CD8-positive, alpha-beta T cell (primary cell): ENCODE measurements at regions of chr14 and their contacts with region 1.

Region 1: DNA sequence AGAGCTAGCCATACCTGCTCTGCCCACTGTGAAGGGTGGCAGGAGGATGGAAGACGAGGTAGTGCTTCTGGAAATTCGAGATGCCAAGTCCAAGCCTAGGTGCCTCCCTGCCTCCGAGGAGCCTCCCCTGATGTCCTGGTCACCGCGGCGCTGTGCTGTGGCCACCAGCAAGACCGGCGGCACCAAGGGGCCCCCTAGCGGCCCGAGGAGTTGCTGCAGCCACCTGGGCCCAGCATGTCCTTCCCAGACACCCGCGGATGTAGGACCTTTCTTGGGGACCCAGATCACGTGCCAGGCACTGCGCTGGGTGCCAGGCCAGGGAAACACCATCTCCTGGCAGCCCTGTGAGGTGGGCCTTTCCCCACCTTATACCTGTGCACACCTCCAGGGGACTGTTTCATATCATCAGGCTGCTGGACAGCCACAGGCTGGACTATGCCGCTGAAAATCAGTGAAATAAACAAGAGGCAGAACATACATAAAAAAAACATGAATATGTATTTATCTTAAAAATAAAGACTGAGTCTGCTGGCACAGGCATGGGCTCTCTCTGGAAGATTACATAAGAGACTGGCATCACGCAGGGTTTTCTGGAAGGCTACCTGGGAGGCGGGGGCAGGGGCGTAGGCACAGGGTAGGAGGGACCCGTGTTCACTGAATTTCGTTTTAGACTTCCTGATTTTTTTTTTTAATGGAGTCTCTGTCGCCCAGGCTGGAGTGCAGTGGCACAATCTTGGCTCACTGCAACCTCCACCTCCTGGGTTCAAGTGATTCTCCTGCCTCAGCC is 15.9 kb upstream of the HHIPL1 start:
- DNase-seq: peak; percentile 27 to 72 (median 56)
- ATAC-seq: peak; percentile 77
- H3K4me3 ChIP-seq: no peak overlapping the region
- H3K4me3 Mint-ChIP-seq: no peak overlapping the region
- H3K27ac ChIP-seq: no peak overlapping the region
- H3K27ac Mint-ChIP-seq: no peak overlapping the region
- H3K4me1 ChIP-seq: no peaks in the 10 kb centered on the region
- H3K4me1 Mint-ChIP-seq: peaks cover 2% of the 10 kb centered on the region
- H3K27me3 ChIP-seq: peaks cover 2 to 4% of the 10 kb centered on the region in 2 experiments
- H3K27me3 Mint-ChIP-seq: peaks cover 27% of the 10 kb centered on the region
- CTCF ChIP-seq: peak; percentile 72

Region 2: DNA sequence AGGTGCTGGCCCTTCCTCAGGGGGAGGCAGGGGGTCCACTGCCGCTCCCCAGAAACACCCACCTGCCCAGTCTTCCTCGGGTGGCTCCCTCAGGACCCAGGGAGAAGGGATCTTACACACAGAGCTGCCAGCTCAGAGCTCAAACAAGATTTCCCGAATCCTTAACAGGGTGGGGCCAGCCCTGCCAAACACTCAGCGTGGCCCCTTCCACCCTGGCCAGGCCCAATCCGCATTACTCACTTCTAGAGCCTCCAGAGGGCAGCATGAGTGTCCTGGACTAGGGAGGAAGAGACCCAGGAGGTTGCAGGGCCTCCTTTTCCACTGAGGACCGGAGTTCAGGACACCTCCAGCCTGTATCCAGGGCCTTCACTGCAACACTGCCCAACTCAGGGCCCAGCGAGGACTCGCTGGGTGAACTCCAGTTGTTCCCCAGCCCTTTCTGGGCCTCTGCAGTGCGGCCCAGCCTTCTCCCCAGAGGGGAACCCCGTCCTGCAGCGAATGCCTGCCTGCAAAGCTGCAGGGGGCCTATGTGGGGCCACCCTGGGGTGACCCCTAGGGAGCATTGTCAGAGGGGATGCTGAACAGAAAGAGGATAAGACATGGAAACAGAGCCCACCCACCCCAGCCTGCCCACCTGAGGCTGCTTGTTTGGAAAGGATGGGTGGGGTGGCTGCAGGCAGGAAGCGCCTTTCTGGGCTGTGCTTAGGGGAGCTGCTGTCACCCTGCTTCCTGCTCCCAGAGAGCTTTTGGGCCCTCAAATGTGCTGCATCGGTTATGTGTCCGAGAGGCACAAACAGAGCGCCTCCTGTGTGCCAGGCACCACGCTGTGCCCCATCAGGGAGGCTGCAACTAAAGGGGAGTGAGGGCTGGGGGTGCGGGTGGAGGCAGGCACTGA is 104.0 kb before region 1 on chr14:
- CTCF ChIA-PET with region 1: interaction called, 11 read pairs
- POLR2A ChIA-PET with region 1: no interaction called
- intact Hi-C with region 1: no loop called
- DNase-seq: peak in 1 of 9 experiments; percentile 13
- ATAC-seq: peak; percentile 70
- H3K4me3 ChIP-seq: no peak overlapping the region
- H3K4me3 Mint-ChIP-seq: peak overlapping the region; percentile 50
- H3K27ac ChIP-seq: peak overlapping the region; percentile 31 to 48
- H3K27ac Mint-ChIP-seq: peak overlapping the region; percentile 84
- H3K4me1 ChIP-seq: peaks cover 20% of the 10 kb centered on the region
- H3K4me1 Mint-ChIP-seq: peaks cover 12% of the 10 kb centered on the region
- H3K27me3 ChIP-seq: no peaks in the 10 kb centered on the region
- H3K27me3 Mint-ChIP-seq: no peaks in the 10 kb centered on the region
- CTCF ChIP-seq: no peak

Region 3: DNA sequence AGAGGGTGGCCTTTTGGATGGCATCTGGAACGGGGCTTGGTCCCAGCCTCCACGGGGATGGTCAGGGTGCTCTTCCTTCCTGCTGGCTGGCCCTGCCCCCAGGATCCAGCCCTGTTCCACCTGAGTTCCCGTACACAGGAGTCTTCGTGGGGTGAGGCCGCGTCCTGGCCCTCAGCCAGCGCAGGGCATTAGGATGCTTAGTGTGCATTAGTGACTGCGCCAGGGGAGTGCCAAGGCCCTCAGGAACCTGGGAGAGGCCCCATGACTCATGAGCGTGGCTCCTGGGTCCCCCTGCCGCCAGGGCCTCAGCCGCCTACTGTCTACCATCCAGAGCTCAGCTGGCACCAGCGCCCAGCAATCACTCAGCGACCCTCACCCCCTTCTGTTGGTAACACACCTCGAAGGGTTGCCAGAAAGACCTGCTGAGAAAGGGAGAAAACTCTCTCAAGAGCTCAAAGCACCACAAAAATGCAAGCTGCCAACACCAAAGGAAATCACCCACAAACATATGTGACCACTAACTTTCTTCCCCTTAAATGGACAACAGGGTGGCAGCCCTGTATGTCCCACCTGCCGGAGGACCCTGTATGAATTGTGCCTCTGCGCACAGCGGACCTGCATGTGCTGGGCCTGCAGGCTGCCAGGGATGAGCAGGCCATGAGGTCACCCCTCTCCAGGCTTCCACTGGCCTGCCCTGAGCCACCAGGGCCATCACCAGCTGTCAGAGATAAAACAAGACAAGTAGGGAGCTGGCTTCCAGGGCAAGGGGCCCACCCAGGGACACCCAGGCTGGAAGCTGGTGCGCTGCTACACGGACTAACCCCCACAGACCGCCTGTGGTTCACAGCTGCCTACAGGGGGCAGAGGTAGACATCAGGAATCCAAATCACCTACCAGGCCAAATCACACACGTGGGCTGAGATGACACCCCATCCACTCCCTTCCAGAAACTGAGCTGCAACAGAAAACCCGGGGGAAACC is 53.7 kb before region 1 on chr14:
- CTCF ChIA-PET with region 1: interaction called, 3 read pairs
- POLR2A ChIA-PET with region 1: no interaction called
- intact Hi-C with region 1: loop called in 1 of 2 experiments (anchors 5 kb)
- DNase-seq: peak in 2 of 9 experiments; percentile 17 to 32
- ATAC-seq: no peak
- H3K4me3 ChIP-seq: no peak overlapping the region
- H3K4me3 Mint-ChIP-seq: no peak overlapping the region
- H3K27ac ChIP-seq: no peak overlapping the region
- H3K27ac Mint-ChIP-seq: no peak overlapping the region
- H3K4me1 ChIP-seq: no peaks in the 10 kb centered on the region
- H3K4me1 Mint-ChIP-seq: peaks cover 10% of the 10 kb centered on the region
- H3K27me3 ChIP-seq: no peaks in the 10 kb centered on the region
- H3K27me3 Mint-ChIP-seq: no peaks in the 10 kb centered on the region
- CTCF ChIP-seq: no peak